Right ventricle myocardium inferior (tissue), 1 donor: ENCODE measurements at regions of chr3 and their contacts with region 1.

Region 1: GRCh38 chr3:123449102-123449996 is 459 bp upstream of the ADCY5 start:
- DNase-seq: no peak
- ATAC-seq: peak; percentile 62

Region 2: DNA sequence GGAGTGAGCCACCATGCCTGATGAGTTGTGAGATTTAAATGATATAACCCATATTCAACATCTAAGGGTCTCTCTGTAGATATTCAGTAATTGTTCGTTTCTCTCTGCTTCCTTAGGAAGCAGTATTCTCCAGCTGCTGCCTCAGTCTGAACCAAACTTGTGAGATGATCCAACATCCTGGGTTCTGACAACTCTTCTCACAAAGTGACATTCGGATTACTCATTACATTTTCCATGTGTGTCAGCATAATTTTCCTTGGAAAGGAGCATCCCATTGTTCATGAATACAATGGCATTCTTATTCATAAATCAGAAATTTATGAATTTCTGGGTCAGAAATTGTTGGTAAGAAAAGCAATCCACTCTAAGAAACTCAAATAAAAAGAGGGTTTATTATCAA is 262.7 kb before region 1 on chr3:
- intact Hi-C with region 1: no loop called
- DNase-seq: no peak
- ATAC-seq: no peak

Region 3: GRCh38 chr3:123328851-123329635 is 120.3 kb before region 1 on chr3:
- intact Hi-C with region 1: loop called (anchors 2 kb)
- DNase-seq: peak; percentile 88
- ATAC-seq: peak; percentile 57

Region 4: GRCh38 chr3:123347684-123348264 is 101.6 kb before region 1 on chr3:
- intact Hi-C with region 1: loop called (anchors 5 kb)
- DNase-seq: no peak
- ATAC-seq: no peak

Region 5: GRCh38 chr3:123375014-123375940 is 74.1 kb before region 1 on chr3:
- intact Hi-C with region 1: loop called (anchors 5 kb)
- DNase-seq: no peak
- ATAC-seq: peak; percentile 50

Region 6: DNA sequence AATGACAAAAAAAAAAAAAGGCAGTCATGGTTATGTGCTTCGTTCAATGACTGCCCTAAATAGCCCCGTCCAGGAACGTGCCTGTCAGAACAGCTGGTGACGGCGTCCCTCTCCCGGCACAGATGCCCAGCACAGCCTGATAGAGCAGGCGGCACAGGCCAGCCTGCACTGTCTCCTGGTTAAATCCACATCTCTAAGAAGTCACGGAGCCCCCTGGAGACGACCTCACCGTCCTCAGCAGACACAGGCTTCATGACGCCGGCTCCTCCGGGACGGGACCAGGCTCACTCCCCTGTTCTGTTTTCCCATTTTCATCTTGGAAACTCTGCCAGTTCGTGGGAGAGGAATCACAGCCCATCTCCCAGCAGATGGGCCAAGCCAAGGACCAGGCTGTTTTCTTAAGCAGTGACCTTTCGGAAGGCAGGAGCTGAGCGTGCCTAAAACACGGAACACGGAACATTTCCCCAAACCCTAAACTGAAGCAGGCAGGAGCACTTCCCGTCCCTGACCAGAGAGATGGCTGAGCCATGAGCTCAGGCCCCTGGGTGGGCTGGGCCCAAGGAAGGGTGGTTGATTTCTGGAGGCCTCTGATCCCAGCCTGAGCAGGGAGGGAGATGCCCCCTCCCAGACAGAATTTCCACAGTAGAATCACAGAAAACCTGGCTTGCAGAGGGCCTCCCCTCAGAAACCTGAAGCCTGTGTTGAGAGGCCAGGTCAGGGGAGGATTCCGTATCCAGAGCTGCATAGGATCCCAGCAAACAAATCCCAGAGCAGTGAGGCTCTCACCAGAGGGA is 36.3 kb before region 1 on chr3:
- intact Hi-C with region 1: loop called (anchors 2 kb)
- DNase-seq: peak; percentile 79
- ATAC-seq: peak; percentile 74

Region 7: DNA sequence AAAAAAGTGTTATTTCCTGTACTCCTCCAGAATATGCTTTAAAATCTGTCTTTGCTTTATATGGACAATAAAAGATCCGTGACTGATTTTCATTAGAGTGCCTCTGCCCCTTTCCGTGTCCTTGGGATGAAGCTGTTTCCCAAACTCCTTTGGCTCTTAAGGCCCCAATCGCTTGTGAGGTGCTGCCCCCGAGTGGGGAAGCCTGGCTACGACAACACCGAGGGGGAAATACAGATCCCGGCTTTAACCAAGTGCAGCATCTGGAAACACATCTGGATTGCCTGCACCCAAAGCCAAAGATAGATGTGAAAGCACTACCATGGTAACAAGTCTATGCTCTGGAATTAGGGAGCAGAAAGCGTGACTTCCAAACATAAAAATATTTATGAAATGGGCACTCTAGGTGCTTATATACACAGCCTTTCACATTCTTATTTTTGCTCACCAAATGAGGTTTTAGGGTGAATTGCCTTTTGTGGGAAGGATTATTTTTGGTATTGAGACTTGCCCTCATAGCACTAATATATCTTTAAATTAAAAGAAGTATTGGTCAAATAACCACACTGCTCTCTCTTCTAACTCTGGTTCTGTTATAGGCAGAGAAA is 40.2 kb after region 1 on chr3:
- intact Hi-C with region 1: loop called (anchors 2 kb)
- DNase-seq: peak; percentile 78
- ATAC-seq: peak; percentile 81